ENCODE measurements at regions of chr10 and their contacts with region 1.

Region 1: GRCh38 chr10:6401562-6402348 is 178.3 kb downstream of the PRKCQ start:
- DNase-seq: peak; percentile 72 to 83 (median 82)
- H3K4me3 ChIP-seq: peak overlapping the region in 2 of 3 experiments; percentile 9 to 60
- H3K4me3 Mint-ChIP-seq: peak overlapping the region; percentile 64 to 76
- H3K27ac ChIP-seq: peak overlapping the region in 1 of 2 donors; percentile 85
- H3K27ac Mint-ChIP-seq: peak overlapping the region; percentile 57 to 98 (median 84)
- H3K4me1 ChIP-seq: peaks cover 51 to 52% of the 10 kb centered on the region in 2 donors
- H3K4me1 Mint-ChIP-seq: peaks cover 52% of the 10 kb centered on the region
- H3K27me3 ChIP-seq: no peaks in the 10 kb centered on the region
- H3K27me3 Mint-ChIP-seq: peaks cover 5 to 20% (median 9%) of the 10 kb centered on the region in 3 donors
- CTCF ChIP-seq: peak; percentile 84

Region 2: GRCh38 chr10:6089391-6090219 is 312.1 kb before region 1 on chr10:
- intact Hi-C with region 1: loop called in 1 of 2 experiments (anchors 5 kb)
- DNase-seq: peak in 1 of 3 donors; percentile 29
- H3K4me3 ChIP-seq: peak overlapping the region; percentile 58 to 97 (median 69)
- H3K4me3 Mint-ChIP-seq: peak overlapping the region; percentile 96 to 98
- H3K27ac ChIP-seq: peak overlapping the region; percentile 27 to 80
- H3K27ac Mint-ChIP-seq: peak overlapping the region; percentile 81 to 96 (median 89)
- H3K4me1 ChIP-seq: peaks cover 54 to 58% of the 10 kb centered on the region in 2 donors
- H3K4me1 Mint-ChIP-seq: peaks cover 56% of the 10 kb centered on the region
- H3K27me3 ChIP-seq: no peaks in the 10 kb centered on the region
- H3K27me3 Mint-ChIP-seq: peaks cover 0 to 6% (median 3%) of the 10 kb centered on the region in 3 donors
- CTCF ChIP-seq: no peak

Region 3: GRCh38 chr10:6108603-6109443 is 292.9 kb before region 1 on chr10:
- intact Hi-C with region 1: loop called (anchors 2 to 5 kb)
- DNase-seq: peak; percentile 33 to 72 (median 68)
- H3K4me3 ChIP-seq: no peak overlapping the region
- H3K4me3 Mint-ChIP-seq: no peak overlapping the region
- H3K27ac ChIP-seq: no peak overlapping the region
- H3K27ac Mint-ChIP-seq: peak overlapping the region in 3 of 7 donors; percentile 3 to 64 (median 51)
- H3K4me1 ChIP-seq: peaks cover 0 to 4% of the 10 kb centered on the region in 2 donors
- H3K4me1 Mint-ChIP-seq: peaks cover 5% of the 10 kb centered on the region
- H3K27me3 ChIP-seq: no peaks in the 10 kb centered on the region
- H3K27me3 Mint-ChIP-seq: no peaks in the 10 kb centered on the region
- CTCF ChIP-seq: peak; percentile 89

Region 4: GRCh38 chr10:6202684-6203330 is 198.9 kb before region 1 on chr10 and contains the start of gene PFKFB3:
- intact Hi-C with region 1: loop called (anchors 1 to 5 kb)
- DNase-seq: peak; percentile 92 to 96 (median 94)
- H3K4me3 ChIP-seq: peak within 1 kb of the TSS; percentile 82 to 97 (median 93)
- H3K4me3 Mint-ChIP-seq: peak within 1 kb of the TSS; percentile 99
- H3K27ac ChIP-seq: peak within 1 kb of the TSS; percentile 31 to 85
- H3K27ac Mint-ChIP-seq: peak within 1 kb of the TSS; percentile 79 to 92 (median 85)
- H3K4me1 ChIP-seq: peaks cover 52 to 60% of the 10 kb centered on the region in 2 donors
- H3K4me1 Mint-ChIP-seq: peaks cover 55% of the 10 kb centered on the region
- H3K27me3 ChIP-seq: peaks cover 0 to 9% of the 10 kb centered on the region in 2 donors
- H3K27me3 Mint-ChIP-seq: peaks cover 8 to 25% (median 24%) of the 10 kb centered on the region in 3 donors
- CTCF ChIP-seq: peak; percentile 97
- polyA plus RNA-seq, gene PFKFB3: 12.2 to 101 (median 15.8) TPM

Region 5: DNA sequence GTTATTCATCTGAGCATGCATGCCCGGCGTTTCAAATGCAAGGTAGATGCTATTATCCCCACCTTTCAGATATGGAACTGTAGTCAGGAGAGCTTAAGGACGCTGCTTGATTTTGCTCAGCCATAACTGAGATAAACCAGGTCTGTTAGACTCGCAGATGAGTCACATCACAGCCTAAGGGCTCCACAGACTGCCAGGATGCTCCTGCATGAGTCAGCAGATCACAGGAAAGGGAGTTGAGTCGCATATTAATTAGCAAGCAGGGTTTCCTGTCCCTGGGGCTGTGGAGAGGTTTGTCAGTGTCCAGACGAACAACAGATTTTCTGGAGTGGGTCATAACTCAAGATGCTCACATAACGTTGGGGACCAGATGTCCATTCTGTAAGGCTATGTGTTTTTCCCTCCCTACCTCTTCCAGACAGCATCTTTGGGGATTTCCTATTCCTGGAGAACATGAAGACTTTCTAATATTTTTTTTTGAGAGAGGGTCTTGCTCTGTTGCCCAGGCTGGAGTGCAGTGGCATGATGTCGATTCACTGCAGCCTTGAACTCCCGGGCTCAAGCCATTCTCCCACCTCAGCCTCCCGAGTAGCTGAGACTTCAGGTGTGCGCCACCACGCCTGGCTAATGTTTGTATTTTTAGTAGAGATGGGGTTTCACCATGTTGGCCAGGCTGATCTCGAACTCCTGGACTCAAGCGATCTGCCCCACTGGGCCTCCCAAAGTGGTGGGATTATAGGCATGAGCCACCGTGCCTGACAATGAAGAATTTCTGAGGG is 162.4 kb before region 1 on chr10:
- intact Hi-C with region 1: loop called in 1 of 2 experiments (anchors 10 kb)
- DNase-seq: peak; percentile 91 to 97 (median 92)
- H3K4me3 ChIP-seq: no peak overlapping the region
- H3K4me3 Mint-ChIP-seq: peak overlapping the region in 1 of 2 donors; percentile 28
- H3K27ac ChIP-seq: peak overlapping the region in 1 of 2 donors; percentile 62
- H3K27ac Mint-ChIP-seq: peak overlapping the region; percentile 25 to 88 (median 82)
- H3K4me1 ChIP-seq: peaks cover 17 to 25% of the 10 kb centered on the region in 2 donors
- H3K4me1 Mint-ChIP-seq: peaks cover 24% of the 10 kb centered on the region
- H3K27me3 ChIP-seq: no peaks in the 10 kb centered on the region
- H3K27me3 Mint-ChIP-seq: peaks cover 0 to 2% (median 1%) of the 10 kb centered on the region in 3 donors
- CTCF ChIP-seq: no peak

Region 6: GRCh38 chr10:6275022-6275997 is 126.4 kb before region 1 on chr10:
- intact Hi-C with region 1: loop called in 1 of 2 experiments (anchors 1 kb)
- DNase-seq: peak; percentile 100
- H3K4me3 ChIP-seq: peak overlapping the region in 2 of 3 experiments; percentile 15 to 24
- H3K4me3 Mint-ChIP-seq: peak overlapping the region; percentile 67 to 83
- H3K27ac ChIP-seq: peak overlapping the region; percentile 96 to 98
- H3K27ac Mint-ChIP-seq: peak overlapping the region; percentile 97 to 100 (median 99)
- H3K4me1 ChIP-seq: peaks cover 27 to 33% of the 10 kb centered on the region in 2 donors
- H3K4me1 Mint-ChIP-seq: peaks cover 49% of the 10 kb centered on the region
- H3K27me3 ChIP-seq: no peaks in the 10 kb centered on the region
- H3K27me3 Mint-ChIP-seq: peaks cover 1 to 17% (median 4%) of the 10 kb centered on the region in 3 donors
- CTCF ChIP-seq: no peak

Region 7: GRCh38 chr10:6348096-6348874 is 53.5 kb before region 1 on chr10:
- intact Hi-C with region 1: loop called (anchors 1 to 10 kb)
- DNase-seq: peak; percentile 93 to 98 (median 94)
- H3K4me3 ChIP-seq: peak overlapping the region in 1 of 3 experiments; percentile 38
- H3K4me3 Mint-ChIP-seq: peak overlapping the region; percentile 61 to 84
- H3K27ac ChIP-seq: peak overlapping the region; percentile 51 to 83
- H3K27ac Mint-ChIP-seq: peak overlapping the region; percentile 91 to 95 (median 93)
- H3K4me1 ChIP-seq: peaks cover 26 to 31% of the 10 kb centered on the region in 2 donors
- H3K4me1 Mint-ChIP-seq: peaks cover 41% of the 10 kb centered on the region
- H3K27me3 ChIP-seq: no peaks in the 10 kb centered on the region
- H3K27me3 Mint-ChIP-seq: peaks cover 0 to 7% (median 1%) of the 10 kb centered on the region in 3 donors
- CTCF ChIP-seq: no peak

Measured in CD14-positive monocyte (primary cell).